BJ (cell line): ENCODE measurements at regions of chr7 and their contacts with region 1.

Region 1: DNA sequence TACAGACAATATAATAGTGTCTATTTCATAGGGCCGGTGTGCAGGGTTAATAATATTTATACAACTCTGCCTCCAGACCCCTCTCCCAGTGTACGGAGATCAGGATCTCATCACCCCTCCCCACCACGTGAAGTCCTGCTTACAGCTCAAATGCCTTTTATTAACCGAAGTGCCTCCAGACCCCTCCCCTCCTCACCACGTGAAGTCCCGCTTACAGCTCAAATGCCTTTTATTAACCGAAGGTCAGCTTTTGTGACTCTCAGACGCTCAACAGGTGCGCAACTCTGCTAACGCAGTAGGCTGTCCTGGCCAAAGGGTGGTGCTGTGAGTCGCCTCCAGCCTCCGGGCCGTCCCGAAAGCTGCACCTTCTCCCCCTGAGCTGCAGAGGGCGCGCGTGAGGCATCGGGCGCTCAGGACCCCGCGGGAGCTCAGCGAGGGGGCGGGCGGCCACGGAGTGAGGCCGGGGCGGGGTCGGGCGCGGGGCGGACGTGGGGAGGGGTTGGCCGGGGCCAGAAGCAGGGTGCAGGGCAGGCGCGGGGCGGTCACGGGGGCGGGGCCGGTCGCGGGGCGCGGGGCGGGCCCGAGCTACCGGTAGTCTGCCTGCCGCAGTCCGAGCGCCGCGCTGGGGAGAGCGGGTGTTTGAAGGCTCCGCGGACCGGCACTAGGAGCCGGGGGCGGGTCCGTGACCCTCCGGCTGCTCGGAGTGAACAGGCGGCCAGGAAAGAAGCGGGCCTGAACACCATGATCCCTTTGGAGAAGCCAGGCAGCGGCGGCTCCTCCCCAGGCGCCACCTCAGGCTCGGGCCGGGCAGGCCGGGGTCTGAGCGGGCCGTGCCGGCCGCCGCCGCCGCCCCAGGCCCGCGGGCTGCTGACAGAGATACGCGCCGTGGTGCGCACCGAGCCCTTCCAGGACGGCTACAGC is at the start of gene STK17A:
- DNase-seq: peak; percentile 34
- H3K4me3 ChIP-seq: peak within 1 kb of the TSS; percentile 77
- H3K27me3 ChIP-seq: 0 out of 2 replicates have a peak, but pooled peaks cover 2% of the 10 kb centered on the region
- CTCF ChIP-seq: peak; percentile 99
- polyA plus RNA-seq, gene STK17A: 12.3 and 26.5 TPM in 2 replicates

Region 2: DNA sequence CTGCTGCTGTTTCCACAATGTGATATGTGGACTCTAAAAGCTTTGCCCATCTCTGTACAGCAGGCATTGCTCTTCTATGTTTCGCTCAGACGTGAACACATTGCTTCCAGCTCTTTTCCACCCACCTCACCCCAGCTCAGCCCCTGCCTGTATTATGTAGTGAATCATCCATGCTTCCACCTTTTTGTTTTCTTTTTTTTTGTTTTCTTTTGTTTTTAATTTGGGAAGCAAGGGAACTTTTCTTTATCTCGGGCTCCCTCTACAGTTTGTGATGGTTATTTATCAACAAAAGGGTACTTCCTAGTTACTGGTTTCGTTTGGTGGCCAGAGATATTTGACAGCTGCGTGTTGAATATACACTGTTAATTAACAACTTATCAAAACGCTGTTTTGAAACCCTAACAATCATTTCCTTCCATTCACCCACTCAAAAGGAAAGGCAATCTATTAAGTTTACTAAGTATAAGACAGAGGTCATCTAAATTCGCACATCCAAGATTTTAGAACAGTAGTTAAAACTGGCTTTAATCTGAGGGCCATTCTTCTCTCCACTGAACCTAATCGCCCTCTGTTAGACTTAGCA is 127.7 kb before region 1 on chr7:
- CTCF ChIA-PET with region 1: interaction called, 21 read pairs
- POLR2A ChIA-PET with region 1: no interaction called
- DNase-seq: peak; percentile 10
- H3K4me3 ChIP-seq: peak overlapping the region; percentile 3; the same call in 1 of the 2 replicates
- H3K27me3 ChIP-seq: no peaks in the 10 kb centered on the region
- CTCF ChIP-seq: peak; percentile 54

Region 3: GRCh38 chr7:43572516-43573049 is 10.2 kb before region 1 on chr7:
- CTCF ChIA-PET with region 1: interaction called, 55 read pairs
- POLR2A ChIA-PET with region 1: interaction called, 7 read pairs
- DNase-seq: peak; percentile 99
- H3K4me3 ChIP-seq: no peak overlapping the region
- H3K27me3 ChIP-seq: no peaks in the 10 kb centered on the region
- CTCF ChIP-seq: no peak

Region 4: GRCh38 chr7:43625453-43625852 is 42.7 kb after region 1 on chr7:
- CTCF ChIA-PET with region 1: interaction called, 23 read pairs
- POLR2A ChIA-PET with region 1: no interaction called
- DNase-seq: no peak
- H3K4me3 ChIP-seq: no peak overlapping the region
- H3K27me3 ChIP-seq: no peaks in the 10 kb centered on the region
- CTCF ChIP-seq: no peak

Region 5: GRCh38 chr7:43664681-43665080 is 81.9 kb after region 1 on chr7:
- CTCF ChIA-PET with region 1: interaction called, 10 read pairs
- POLR2A ChIA-PET with region 1: no interaction called
- DNase-seq: no peak
- H3K4me3 ChIP-seq: no peak overlapping the region
- H3K27me3 ChIP-seq: no peaks in the 10 kb centered on the region
- CTCF ChIP-seq: no peak

Region 6: GRCh38 chr7:43700059-43700501 is 117.3 kb after region 1 on chr7:
- CTCF ChIA-PET with region 1: interaction called, 346 read pairs
- POLR2A ChIA-PET with region 1: interaction called, 13 read pairs
- DNase-seq: no peak
- H3K4me3 ChIP-seq: no peak overlapping the region
- H3K27me3 ChIP-seq: no peaks in the 10 kb centered on the region
- CTCF ChIP-seq: peak; percentile 58

Region 7: GRCh38 chr7:43729214-43729923 is 146.6 kb after region 1 on chr7 and contains the start of gene COA1:
- CTCF ChIA-PET with region 1: interaction called, 14 read pairs
- POLR2A ChIA-PET with region 1: no interaction called
- DNase-seq: peak; percentile 53
- H3K4me3 ChIP-seq: peak within 1 kb of the TSS; percentile 92
- H3K27me3 ChIP-seq: no peaks in the 10 kb centered on the region
- CTCF ChIP-seq: peak; percentile 19; the same call in 1 of the 2 replicates
- polyA plus RNA-seq, gene COA1: 20.2 and 23.4 TPM in 2 replicates